Mammary epithelial cell (primary cell): ENCODE measurements at regions of chr1 and their contacts with region 1.

Region 1: DNA sequence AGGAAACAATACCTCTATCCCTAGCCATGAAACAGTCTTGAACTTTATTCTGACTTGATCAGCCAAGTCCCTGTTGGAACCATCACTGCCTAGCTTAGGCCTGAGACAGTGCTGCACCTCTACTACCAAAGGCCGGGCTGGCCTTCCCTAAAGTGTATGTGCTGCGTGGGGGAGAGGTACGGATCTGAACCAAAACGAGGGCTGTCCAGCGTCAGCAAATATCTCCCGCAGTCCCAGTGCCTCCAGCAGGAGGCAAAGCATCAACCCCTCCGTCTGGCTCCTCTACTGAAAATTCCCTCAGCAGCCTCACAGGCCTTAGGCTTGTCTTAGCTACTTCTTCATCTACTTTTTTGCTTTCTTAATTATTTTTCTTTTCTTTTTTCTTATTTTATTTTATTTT is 33.3 kb upstream of the KIF26B start:
- DNase-seq: no peak
- H3K4me3 ChIP-seq: no peak overlapping the region
- H3K27ac ChIP-seq: no peak overlapping the region
- H3K4me1 ChIP-seq: no peaks in the 10 kb centered on the region
- H3K27me3 ChIP-seq: no peaks in the 10 kb centered on the region
- CTCF ChIP-seq: no peak

Region 2: DNA sequence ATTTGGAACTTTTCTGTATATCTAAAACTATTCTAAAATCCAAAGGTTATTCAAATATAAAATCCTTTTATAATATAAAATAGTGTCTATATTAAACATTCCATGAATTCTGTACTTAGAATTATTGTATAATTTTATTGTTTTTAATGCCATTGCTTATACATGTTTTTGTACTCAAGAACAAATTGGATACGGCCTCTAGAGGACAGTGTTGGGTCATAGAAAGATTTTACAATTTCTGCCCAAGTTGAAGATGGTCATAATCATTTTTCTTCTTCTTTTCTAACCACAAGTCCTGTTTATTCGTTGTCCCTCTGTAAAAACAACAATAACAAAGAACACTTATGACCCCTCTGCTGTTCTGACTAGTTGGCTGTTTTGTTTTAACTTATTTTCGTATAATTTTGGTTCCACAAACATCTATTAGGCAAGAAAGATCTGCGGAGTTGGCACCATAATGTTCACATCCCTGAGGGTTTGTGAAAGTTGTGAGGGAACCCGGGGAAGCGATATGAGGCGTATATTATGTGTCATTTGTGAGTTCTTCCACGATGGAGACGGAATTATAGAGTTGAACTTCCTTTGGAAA is 42.4 kb before region 1 on chr1:
- CTCF ChIA-PET with region 1: no interaction called
- dilution Hi-C with region 1: no loop called
- in situ Hi-C with region 1: no loop called
- intact Hi-C with region 1: no loop called
- DNase-seq: peak; percentile 26
- H3K4me3 ChIP-seq: no peak overlapping the region
- H3K27ac ChIP-seq: no peak overlapping the region
- H3K4me1 ChIP-seq: no peaks in the 10 kb centered on the region
- H3K27me3 ChIP-seq: no peaks in the 10 kb centered on the region
- CTCF ChIP-seq: peak; percentile 81 to 90

Region 3: GRCh38 chr1:245225322-245226202 is 104.0 kb after region 1 on chr1:
- CTCF ChIA-PET with region 1: no interaction called
- dilution Hi-C with region 1: loop called (anchors 5 kb)
- in situ Hi-C with region 1: no loop called
- intact Hi-C with region 1: no loop called
- DNase-seq: no peak
- H3K4me3 ChIP-seq: no peak overlapping the region
- H3K27ac ChIP-seq: no peak overlapping the region
- H3K4me1 ChIP-seq: no peaks in the 10 kb centered on the region
- H3K27me3 ChIP-seq: no peaks in the 10 kb centered on the region
- CTCF ChIP-seq: no peak